Activated naive CD4-positive, alpha-beta T cell treated with anti-CD3 and anti-CD28 coated beads for 36 hours (primary cell): ENCODE measurements at regions of chr12 and their contacts with region 1.

Region 1: GRCh38 chr12:96399919-96400797 is at the start of gene CDK17:
- DNase-seq: peak; percentile 90
- H3K4me3 Mint-ChIP-seq: peak within 1 kb of the TSS; percentile 81
- H3K27ac Mint-ChIP-seq: peak within 1 kb of the TSS; percentile 94
- H3K4me1 Mint-ChIP-seq: peaks cover 35% of the 10 kb centered on the region
- H3K27me3 Mint-ChIP-seq: no peaks in the 10 kb centered on the region
- total RNA-seq, gene CDK17: 41.4 to 45.8 TPM

Region 2: DNA sequence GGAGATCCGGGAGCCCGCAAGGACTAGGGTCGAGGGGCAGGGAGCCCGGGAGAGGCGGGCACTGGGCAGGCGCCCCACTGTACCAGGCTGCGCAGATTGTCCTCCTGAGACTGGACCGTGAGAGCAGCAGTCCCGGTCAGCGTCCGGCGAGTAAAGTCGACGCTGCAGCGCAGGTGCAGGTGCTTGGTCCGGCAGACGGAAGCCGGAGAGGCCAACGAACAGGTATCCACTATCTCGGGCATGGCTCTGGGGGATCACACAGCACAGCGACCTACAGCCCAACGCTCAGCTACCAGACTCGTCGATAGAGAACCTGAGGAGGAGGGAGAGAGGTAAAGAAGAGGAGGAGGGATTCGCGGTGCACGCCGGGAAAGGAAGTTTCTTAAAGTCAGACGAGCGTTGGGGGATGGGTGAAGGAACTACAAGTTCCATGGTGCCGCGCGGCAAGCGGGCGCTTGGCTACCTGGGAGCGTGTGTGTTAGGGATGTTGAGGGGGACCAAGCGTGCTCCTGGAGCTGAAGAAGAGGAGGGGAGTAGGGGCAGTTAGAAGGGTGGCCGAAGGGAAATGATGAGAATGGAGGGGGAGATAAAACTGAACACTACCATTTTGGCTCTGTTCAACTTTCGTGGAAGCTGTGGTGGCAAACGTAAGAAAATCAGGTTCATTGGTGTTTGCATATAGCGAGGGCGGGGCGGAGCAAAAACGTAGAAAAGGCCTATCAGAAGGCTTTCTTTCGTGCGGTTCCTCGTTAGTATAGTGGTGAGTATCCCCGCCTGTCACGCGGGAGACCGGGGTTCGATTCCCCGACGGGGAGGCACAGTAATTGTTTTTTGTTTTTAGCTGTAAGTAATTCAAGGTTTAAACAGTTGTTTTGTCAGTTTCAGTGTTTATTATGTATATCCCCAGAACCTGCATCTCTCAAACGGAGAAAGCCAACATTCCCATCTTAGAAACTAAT is 364.6 kb before region 1 on chr12 and contains the start of gene LTA4H:
- CTCF ChIA-PET with region 1: no interaction called
- intact Hi-C with region 1: loop called (anchors 1 kb)
- DNase-seq: peak; percentile 98
- H3K4me3 Mint-ChIP-seq: no peak within 1 kb of the TSS
- H3K27ac Mint-ChIP-seq: no peak within 1 kb of the TSS
- H3K4me1 Mint-ChIP-seq: peaks cover 19% of the 10 kb centered on the region
- H3K27me3 Mint-ChIP-seq: no peaks in the 10 kb centered on the region
- total RNA-seq, gene LTA4H: 125 TPM

Region 3: DNA sequence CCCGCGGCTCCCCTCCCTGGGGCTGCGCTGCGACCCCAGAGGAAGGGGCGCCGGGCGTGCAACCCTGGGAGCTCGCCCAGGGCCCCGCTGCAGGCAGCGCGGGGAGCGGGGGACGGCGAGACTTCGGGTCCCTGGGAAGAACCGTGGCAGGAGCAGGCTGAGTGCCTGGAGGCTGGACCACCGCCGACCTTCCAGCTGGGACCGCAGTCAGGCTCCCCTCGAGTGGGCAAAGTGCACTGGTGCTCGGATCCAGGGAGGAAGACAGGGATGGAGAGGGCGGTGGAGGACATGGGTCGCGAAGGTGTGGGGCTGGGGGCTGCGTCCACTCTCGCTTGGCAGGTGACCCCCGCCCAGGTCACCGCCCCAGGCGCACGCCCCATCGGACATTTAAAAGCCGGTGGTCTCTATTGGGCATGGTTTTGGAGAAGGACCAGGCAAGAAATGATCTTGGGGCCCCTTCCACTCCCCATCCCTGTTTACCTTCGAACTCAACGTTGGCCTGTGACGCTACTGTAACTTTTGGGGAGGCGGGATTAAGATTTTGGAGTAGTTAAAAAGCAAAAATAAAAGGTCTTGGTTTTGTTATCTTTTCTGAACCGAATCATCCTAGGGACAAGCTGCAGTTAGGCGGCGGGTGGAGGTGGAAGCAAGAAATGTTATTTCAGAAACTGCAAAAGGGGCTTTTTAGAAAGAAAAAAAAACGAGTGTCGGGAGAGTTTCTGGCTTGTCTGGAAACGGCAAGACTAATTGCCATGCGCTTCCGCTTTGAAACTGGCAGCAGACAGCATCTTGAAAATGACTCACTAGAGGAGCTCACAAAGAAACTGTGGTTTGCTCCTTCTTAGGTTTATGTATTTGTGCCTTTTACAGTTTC is 204.9 kb before region 1 on chr12:
- CTCF ChIA-PET with region 1: interaction called, 3 read pairs
- intact Hi-C with region 1: loop called (anchors 1 kb)
- DNase-seq: peak; percentile 91
- H3K4me3 Mint-ChIP-seq: peak overlapping the region; percentile 99
- H3K27ac Mint-ChIP-seq: peak overlapping the region; percentile 100
- H3K4me1 Mint-ChIP-seq: peaks cover 54% of the 10 kb centered on the region
- H3K27me3 Mint-ChIP-seq: no peaks in the 10 kb centered on the region

Region 4: DNA sequence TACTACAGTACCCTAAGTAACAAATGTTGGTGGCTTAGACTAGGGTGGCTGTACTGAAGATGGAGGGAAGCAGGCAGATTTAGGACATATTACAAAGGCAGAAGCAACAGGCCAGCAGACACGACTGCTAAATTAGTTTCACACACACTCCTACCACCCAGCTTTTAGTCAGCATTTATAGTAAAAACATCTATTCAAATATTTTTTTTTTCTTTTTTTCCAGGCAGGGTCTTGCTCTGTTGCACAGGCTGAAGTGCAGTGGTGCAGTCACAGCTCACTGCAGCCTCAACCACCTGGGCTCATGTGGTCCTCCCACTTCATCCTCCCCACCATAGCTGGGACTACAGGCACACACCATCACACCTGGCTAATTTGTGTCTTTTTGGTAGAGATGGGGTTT is 72.8 kb before region 1 on chr12:
- CTCF ChIA-PET with region 1: interaction called, 3 read pairs
- intact Hi-C with region 1: loop called (anchors 2 kb)
- DNase-seq: no peak
- H3K4me3 Mint-ChIP-seq: no peak overlapping the region
- H3K27ac Mint-ChIP-seq: peak overlapping the region; percentile 65
- H3K4me1 Mint-ChIP-seq: peaks cover 49% of the 10 kb centered on the region
- H3K27me3 Mint-ChIP-seq: no peaks in the 10 kb centered on the region

Region 5: GRCh38 chr12:96368233-96368632 is 31.9 kb before region 1 on chr12:
- CTCF ChIA-PET with region 1: no interaction called
- intact Hi-C with region 1: no loop called
- DNase-seq: no peak
- H3K4me3 Mint-ChIP-seq: no peak overlapping the region
- H3K27ac Mint-ChIP-seq: no peak overlapping the region
- H3K4me1 Mint-ChIP-seq: peaks cover 71% of the 10 kb centered on the region
- H3K27me3 Mint-ChIP-seq: no peaks in the 10 kb centered on the region

Region 6: GRCh38 chr12:96427269-96427729 is 27.1 kb after region 1 on chr12:
- CTCF ChIA-PET with region 1: interaction called, 3 read pairs
- intact Hi-C with region 1: loop called (anchors 1 kb)
- DNase-seq: peak; percentile 81
- H3K4me3 Mint-ChIP-seq: no peak overlapping the region
- H3K27ac Mint-ChIP-seq: peak overlapping the region; percentile 74
- H3K4me1 Mint-ChIP-seq: peaks cover 42% of the 10 kb centered on the region
- H3K27me3 Mint-ChIP-seq: no peaks in the 10 kb centered on the region

Region 7: DNA sequence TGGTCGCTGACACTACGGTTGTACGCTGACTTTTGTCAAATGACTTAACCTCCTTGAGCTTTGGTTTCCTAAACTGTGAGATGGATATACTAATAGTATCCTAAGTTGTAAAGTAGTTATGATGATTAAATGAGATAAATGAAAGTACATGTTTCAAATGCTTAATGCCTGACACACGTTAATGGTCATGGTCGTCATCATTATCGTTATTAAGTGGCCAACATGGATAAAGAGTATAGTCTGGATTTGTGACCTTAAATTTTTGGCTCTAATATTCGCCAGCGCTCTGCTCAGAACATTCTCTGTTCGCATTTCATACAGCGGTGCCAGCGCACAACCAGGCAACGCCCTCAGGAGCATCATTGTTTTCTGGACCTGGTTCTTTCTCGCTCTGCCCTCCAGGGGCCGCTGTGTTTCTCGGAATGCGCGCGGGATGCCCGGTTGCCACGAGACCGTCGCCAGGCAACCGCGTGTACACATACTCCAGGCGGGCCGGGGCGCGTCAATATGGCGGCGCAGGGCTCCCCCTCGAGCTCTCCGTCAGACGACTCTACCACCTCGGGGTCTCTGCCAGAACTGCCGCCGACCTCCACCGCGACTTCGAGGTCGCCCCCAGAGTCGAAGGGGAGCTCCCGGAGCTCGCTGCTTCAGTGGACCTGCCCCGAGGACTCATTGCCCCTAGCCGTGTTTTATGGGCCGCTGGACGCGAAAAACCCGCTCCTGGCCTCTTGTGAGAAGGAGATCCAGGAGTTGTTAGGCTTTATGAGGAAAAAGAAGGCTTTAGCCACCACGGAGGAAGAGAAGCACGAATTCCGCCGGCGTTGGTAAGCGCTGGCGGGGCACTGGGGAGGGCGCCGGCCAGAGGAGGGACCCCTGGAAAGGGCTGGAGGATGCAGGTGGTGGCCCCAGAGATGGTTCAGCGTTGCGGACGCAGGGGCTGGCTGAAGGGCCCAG is 89.2 kb after region 1 on chr12 and contains the start of gene CFAP54:
- CTCF ChIA-PET with region 1: interaction called, 17 read pairs
- intact Hi-C with region 1: loop called (anchors 1 kb)
- DNase-seq: peak; percentile 96
- H3K4me3 Mint-ChIP-seq: peak within 1 kb of the TSS; percentile 85
- H3K27ac Mint-ChIP-seq: no peak within 1 kb of the TSS
- H3K4me1 Mint-ChIP-seq: peaks cover 24% of the 10 kb centered on the region
- H3K27me3 Mint-ChIP-seq: no peaks in the 10 kb centered on the region
- total RNA-seq, gene CFAP54: 0.38 to 0.64 TPM

Region 8: GRCh38 chr12:96906849-96907670 is 506.9 kb after region 1 on chr12 and contains the start of gene NEDD1:
- CTCF ChIA-PET with region 1: interaction called, 3 read pairs
- intact Hi-C with region 1: loop called (anchors 1 kb)
- DNase-seq: peak; percentile 82
- H3K4me3 Mint-ChIP-seq: peak within 1 kb of the TSS; percentile 97
- H3K27ac Mint-ChIP-seq: peak within 1 kb of the TSS; percentile 95
- H3K4me1 Mint-ChIP-seq: peaks cover 41% of the 10 kb centered on the region
- H3K27me3 Mint-ChIP-seq: no peaks in the 10 kb centered on the region
- total RNA-seq, gene NEDD1: 61.8 to 63.8 TPM

Region 9: DNA sequence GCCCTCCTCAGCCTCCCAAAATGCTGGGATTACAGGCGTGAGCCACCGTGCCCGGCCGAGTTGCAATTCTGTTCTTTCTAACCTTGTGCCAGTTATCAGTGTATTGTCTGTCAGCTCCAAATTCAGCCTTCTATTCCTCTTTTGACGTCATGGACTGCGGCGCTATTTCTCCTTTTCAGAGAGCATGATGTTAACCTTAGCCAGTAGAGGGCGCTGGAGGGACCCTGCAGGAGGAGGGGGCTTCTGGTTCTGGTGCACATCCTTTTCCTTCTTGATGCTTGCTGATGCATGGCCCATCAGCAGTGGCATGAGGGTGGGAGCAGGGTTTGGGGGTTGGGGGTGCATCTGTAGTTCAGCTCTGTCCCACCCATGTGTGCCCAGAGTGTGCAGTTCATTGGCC is 883.1 kb after region 1 on chr12:
- CTCF ChIA-PET with region 1: no interaction called
- intact Hi-C with region 1: no loop called
- DNase-seq: peak; percentile 31
- H3K4me3 Mint-ChIP-seq: no peak overlapping the region
- H3K27ac Mint-ChIP-seq: no peak overlapping the region
- H3K4me1 Mint-ChIP-seq: no peaks in the 10 kb centered on the region
- H3K27me3 Mint-ChIP-seq: peaks cover 7% of the 10 kb centered on the region

Region 10: GRCh38 chr12:97666263-97666662 is 1266.1 kb after region 1 on chr12:
- CTCF ChIA-PET with region 1: no interaction called
- intact Hi-C with region 1: no loop called
- DNase-seq: no peak
- H3K4me3 Mint-ChIP-seq: no peak overlapping the region
- H3K27ac Mint-ChIP-seq: no peak overlapping the region
- H3K4me1 Mint-ChIP-seq: no peaks in the 10 kb centered on the region
- H3K27me3 Mint-ChIP-seq: no peaks in the 10 kb centered on the region